H1 (cell line): ENCODE measurements at regions of chr1 and their contacts with region 1.

Region 1: DNA sequence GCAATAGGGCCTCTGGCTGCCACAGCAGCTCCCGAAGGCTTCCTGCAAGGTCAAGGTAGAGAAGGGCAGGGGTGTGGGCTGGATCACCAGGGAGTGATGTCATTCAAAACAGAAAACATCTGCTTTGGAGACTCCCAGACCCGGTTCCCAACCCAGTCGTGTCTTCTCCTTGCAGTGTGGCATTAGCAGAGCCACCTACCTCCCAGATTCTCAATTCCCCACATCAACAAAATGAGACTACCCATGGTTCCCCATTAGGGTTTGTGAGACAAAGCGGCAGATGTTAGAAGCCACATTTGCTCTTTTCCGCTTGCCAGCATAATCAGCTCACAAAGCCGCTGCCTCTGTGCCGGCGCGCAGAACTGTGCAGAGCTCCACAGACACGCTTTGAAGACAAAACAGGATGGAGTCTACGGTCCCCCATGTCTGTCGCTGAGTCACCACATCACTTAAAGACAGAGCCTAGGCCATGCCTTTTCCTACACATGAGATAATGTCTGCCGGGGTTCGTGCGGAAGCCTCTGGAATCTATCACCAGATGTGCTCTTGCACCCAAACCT is 12.5 kb downstream of the KIF17 start:
- DNase-seq: no peak
- H3K4me3 ChIP-seq: no peak overlapping the region
- H3K27ac ChIP-seq: no peak overlapping the region
- H3K4me1 ChIP-seq: no peaks in the 10 kb centered on the region
- H3K27me3 ChIP-seq: no peaks in the 10 kb centered on the region
- CTCF ChIP-seq: no peak
- EP300 ChIP-seq: no peak
- POLR2A ChIP-seq: no peak
- RAD21 ChIP-seq: no peak

Region 2: GRCh38 chr1:20551945-20552727 is 153.1 kb before region 1 on chr1 and contains the start of gene FAM43B:
- CTCF ChIA-PET with region 1: no interaction called
- POLR2A ChIA-PET with region 1: no interaction called
- DNase-seq: peak in 1 of 2 experiments; percentile 83
- H3K4me3 ChIP-seq: peak within 1 kb of the TSS; percentile 7 to 67 (median 42)
- H3K27ac ChIP-seq: no peak within 1 kb of the TSS
- H3K4me1 ChIP-seq: peaks cover 0 to 21% (median 11%) of the 10 kb centered on the region in 4 experiments; a peak in 4 of 7 replicates
- H3K27me3 ChIP-seq: peaks cover 34 to 57% (median 53%) of the 10 kb centered on the region in 4 experiments
- CTCF ChIP-seq: no peak
- EP300 ChIP-seq: no peak
- POLR2A ChIP-seq: no peak
- RAD21 ChIP-seq: no peak
- total RNA-seq, gene FAM43B: 1.9 and 2.2 TPM in 2 replicates

Region 3: GRCh38 chr1:20727384-20728316 is 22.4 kb after region 1 on chr1:
- CTCF ChIA-PET with region 1: interaction called, 16 read pairs
- POLR2A ChIA-PET with region 1: interaction called, 3 read pairs
- DNase-seq: peak in 1 of 2 experiments; percentile 81
- H3K4me3 ChIP-seq: peak overlapping the region in 1 of 4 experiments; percentile 34; a peak in 1 of 8 replicates
- H3K27ac ChIP-seq: no peak overlapping the region
- H3K4me1 ChIP-seq: peaks cover 0 to 43% (median 31%) of the 10 kb centered on the region in 4 experiments; a peak in 6 of 7 replicates
- H3K27me3 ChIP-seq: peaks cover 2 to 17% (median 14%) of the 10 kb centered on the region in 4 experiments
- CTCF ChIP-seq: peak in 2 of 3 experiments; percentile 44 to 59; a peak in 2 of 4 replicates
- EP300 ChIP-seq: peak in 1 of 2 experiments; percentile 53; a peak in 1 of 3 replicates
- POLR2A ChIP-seq: no peak
- RAD21 ChIP-seq: peak; percentile 52 to 54

Region 4: DNA sequence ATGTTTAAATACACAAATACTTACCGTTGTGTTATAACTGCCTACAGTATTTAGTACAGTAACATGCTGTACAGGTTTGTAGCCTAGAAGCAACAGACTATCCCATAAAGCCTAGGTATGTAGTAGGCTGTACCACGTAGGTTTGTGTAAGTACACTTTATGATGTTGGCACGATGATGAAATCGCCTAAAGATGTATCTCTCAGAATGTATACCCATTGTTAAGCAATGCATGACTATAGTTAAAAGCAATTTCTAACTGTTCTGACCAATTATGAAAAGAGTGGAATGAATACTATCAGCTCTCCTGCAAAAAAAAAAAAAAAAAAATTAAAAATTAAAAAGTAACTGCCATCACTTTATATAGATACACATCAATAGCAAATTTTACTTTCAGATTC is 70.4 kb after region 1 on chr1:
- CTCF ChIA-PET with region 1: no interaction called
- POLR2A ChIA-PET with region 1: no interaction called
- DNase-seq: no peak
- H3K4me3 ChIP-seq: no peak overlapping the region
- H3K27ac ChIP-seq: no peak overlapping the region
- H3K4me1 ChIP-seq: no peaks in the 10 kb centered on the region
- H3K27me3 ChIP-seq: no peaks in the 10 kb centered on the region
- CTCF ChIP-seq: no peak
- EP300 ChIP-seq: no peak
- POLR2A ChIP-seq: no peak
- RAD21 ChIP-seq: no peak